Pancreas (tissue), 10 donors: ENCODE measurements at regions of chr6 and their contacts with region 1.

Region 1: GRCh38 chr6:30489081-30490025 is at the start of gene HLA-E:
- DNase-seq: peak; percentile 81 to 96 (median 92)
- ATAC-seq: peak; percentile 96 to 98 (median 97)
- H3K4me3 ChIP-seq: peak within 1 kb of the TSS; percentile 58 to 83 (median 76)
- H3K27ac ChIP-seq: peak within 1 kb of the TSS; percentile 62 to 98 (median 86)
- H3K4me1 ChIP-seq: peaks cover 0 to 15% (median 0%) of the 10 kb centered on the region in 3 donors
- H3K27me3 ChIP-seq: no peaks in the 10 kb centered on the region
- CTCF ChIP-seq: no peak
- total RNA-seq, gene HLA-E: 65.7 to 158 (median 81.1) TPM

Region 2: DNA sequence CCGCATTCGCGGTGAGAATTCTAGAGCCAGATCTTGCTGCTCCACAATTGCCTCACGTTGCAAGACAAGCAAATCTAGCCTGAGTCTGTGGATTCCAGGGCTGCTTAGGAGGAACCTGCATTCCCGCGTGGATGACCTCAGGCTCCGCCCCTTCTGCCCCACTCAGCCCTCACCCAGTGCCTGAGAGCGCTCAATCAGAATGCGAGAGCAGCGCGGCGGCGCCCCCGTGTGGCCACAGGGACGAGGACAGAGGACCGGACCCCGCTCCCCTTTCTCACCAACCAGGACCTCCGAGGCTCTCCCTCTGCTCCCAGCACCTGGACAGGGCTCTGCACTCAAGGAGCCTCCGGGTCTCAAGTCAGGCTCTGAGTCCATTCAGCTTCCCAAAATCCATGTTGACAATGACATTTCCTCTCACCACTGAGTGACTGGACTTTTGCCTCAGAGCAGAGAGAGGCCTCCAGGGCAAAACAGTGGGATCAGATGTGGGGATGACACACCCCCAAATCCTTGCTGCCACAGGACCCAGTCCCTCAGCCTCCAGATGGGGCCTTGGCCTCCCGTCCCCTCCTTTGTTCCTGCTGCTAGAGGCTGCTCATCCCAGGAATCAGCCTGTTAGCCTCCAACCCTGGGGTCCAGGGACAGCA is 92.4 kb before region 1 on chr6:
- intact Hi-C with region 1: no loop called
- DNase-seq: peak; percentile 55 to 97 (median 79)
- ATAC-seq: peak; percentile 93 to 100 (median 98)
- H3K4me3 ChIP-seq: no peak overlapping the region
- H3K27ac ChIP-seq: no peak overlapping the region
- H3K4me1 ChIP-seq: no peaks in the 10 kb centered on the region
- H3K27me3 ChIP-seq: peaks cover 0 to 3% (median 0%) of the 10 kb centered on the region in 4 donors
- CTCF ChIP-seq: peak; percentile 66 to 84 (median 74)

Region 3: DNA sequence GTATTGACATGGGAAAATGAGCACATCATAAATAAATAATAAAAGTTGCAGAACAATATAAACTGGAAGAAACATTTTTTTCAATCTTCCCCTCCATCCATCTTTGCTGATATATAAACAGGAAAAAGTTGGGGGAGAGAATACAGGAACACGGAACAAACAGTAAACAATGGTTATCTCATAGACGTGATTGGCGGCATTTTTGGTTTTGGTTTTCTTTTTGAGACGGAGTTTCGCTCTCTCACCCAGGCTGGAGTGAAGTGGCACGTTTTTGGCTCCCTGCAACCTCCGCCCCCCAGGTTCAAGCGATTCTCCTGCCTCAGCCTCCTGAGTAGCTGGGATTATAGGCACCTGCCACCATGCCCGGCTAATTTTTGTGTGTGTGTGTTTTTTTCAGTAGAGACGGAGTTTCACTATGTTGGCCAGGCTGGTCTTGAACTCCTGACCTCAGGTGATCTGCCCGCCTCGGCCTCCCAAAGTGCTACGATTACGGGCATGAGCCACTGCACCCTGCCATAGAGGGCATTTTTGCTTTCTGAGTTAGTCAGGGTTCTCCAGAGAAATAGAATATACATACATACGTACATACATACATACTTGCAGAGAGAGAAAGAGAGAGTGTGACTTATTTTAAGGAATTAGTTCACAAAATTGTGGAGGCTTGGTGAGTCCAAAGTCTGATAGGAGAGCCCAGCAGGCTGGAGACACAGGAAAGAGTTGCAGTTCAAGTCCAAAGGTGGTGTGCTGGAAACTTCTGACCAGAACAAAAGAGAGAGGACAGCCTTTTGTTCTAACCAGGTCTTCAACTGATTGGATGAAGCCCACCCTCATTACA is 44.3 kb after region 1 on chr6:
- intact Hi-C with region 1: loop called in 2 of 3 experiments (anchors 5 to 10 kb)
- DNase-seq: no peak
- ATAC-seq: no peak
- H3K4me3 ChIP-seq: no peak overlapping the region
- H3K27ac ChIP-seq: no peak overlapping the region
- H3K4me1 ChIP-seq: no peaks in the 10 kb centered on the region
- H3K27me3 ChIP-seq: no peaks in the 10 kb centered on the region
- CTCF ChIP-seq: no peak

Region 4: DNA sequence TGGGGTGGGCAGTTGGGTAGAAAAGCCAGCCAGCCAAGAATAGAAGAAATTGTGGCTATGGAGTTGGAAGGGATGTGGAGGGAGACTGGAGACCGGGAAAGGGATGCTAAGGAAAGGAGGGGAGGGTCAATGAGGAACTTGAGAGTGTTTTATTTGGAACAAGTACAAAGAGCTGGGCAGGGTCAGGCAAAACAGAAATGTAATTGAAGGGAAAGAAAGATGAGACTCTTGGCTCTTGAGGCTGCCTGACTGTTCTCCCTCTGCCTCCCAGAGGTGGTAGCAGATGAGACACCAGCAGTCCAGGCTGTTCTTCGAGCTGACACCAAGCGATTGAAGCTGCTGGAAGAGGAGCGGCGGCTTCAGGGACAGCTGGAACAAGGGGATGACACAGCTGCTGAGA is 94.6 kb after region 1 on chr6:
- intact Hi-C with region 1: no loop called
- DNase-seq: no peak
- ATAC-seq: no peak
- H3K4me3 ChIP-seq: no peak overlapping the region
- H3K27ac ChIP-seq: no peak overlapping the region
- H3K4me1 ChIP-seq: no peaks in the 10 kb centered on the region
- H3K27me3 ChIP-seq: no peaks in the 10 kb centered on the region
- CTCF ChIP-seq: no peak

Region 5: GRCh38 chr6:30647242-30648116 is 158.1 kb after region 1 on chr6:
- intact Hi-C with region 1: no loop called
- DNase-seq: peak; percentile 69 to 92 (median 82)
- ATAC-seq: peak; percentile 83 to 89 (median 84)
- H3K4me3 ChIP-seq: peak overlapping the region; percentile 71 to 90 (median 85)
- H3K27ac ChIP-seq: peak overlapping the region; percentile 83 to 89 (median 85)
- H3K4me1 ChIP-seq: peaks cover 0 to 9% (median 0%) of the 10 kb centered on the region in 3 donors
- H3K27me3 ChIP-seq: no peaks in the 10 kb centered on the region
- CTCF ChIP-seq: no peak